Activated CD8-positive, alpha-beta T cell treated with anti-CD3 and anti-CD28 coated beads, Interleukin-2, amount 10 ng/mL, durations not matched to agents 7 days and 5 days (primary cell): ENCODE measurements at regions of chr2 and their contacts with region 1.

Region 1: DNA sequence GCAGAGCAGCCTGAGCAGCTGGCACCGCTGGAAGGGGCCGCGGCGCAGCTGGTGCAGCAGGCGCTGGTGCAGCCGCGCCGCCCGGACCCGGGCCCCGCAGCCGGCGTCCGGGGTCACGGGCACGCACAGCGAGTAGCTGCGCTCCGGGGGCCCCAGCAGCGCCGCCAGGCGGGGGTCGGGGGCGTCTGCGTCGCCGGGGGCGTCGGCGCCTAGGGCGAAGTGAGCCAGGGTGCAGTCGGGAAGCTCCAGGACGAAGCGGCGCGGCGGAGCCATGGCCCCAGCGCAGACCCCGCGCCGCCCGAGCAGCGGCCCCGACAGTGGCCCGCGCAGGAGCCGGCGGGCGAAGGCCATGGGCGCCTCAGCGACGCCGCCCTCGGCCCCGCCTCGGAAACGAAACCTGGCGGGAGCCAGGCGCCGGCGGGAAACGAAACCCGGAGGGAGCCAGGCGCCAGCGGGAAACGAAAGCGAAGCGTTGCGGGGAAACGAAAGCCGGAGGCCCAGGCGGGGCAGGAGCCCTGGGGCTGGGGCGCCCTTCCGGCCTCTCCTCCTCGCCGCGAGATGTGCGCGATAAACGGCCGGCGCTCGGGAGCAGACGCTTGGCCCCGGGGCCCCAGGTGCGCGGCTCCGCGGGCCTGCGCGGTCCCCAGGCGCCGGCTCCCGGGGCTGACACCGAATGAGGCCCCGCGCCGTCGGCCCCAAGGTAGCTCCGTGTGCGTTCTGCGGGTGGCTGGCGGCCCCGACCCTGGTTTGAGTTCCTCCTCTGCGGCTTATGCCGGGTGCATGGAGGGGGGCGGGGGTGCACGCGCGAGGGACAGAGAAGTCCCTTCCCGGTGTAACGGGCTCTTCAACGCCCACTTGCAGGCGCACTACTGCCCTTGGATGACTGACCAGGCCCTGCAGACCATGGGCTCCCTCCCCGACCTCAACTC is at the start of gene CMPK2:
- DNase-seq: peak; percentile 94
- ATAC-seq: peak; percentile 84
- H3K4me3 Mint-ChIP-seq: peak within 1 kb of the TSS; percentile 91
- H3K27ac Mint-ChIP-seq: peak within 1 kb of the TSS; percentile 98
- H3K4me1 Mint-ChIP-seq: peaks cover 68% of the 10 kb centered on the region
- H3K27me3 Mint-ChIP-seq: no peaks in the 10 kb centered on the region
- total RNA-seq, gene CMPK2: 84.0 to 90.8 TPM

Region 2: DNA sequence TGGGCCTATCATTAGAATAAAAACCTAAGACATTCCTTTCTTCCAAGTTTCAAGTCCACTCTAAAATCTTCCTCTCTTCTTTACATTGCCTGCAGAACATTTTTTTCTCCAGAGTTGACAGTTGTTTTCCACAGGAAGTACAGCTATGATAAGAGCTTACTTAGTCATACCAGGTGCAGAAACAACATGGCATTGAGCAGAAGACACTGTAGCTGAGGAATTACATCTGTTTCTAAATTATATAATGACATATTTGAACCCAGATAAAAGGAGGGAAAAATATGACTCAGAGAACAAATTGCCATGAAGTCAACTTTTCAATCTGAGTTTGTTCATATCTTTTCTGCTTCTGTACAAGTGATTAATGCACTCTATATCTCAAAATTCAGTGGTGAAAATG is 30.1 kb before region 1 on chr2:
- CTCF ChIA-PET with region 1: interaction called, 15 read pairs
- POLR2A ChIA-PET with region 1: interaction called, 9 read pairs
- DNase-seq: no peak
- ATAC-seq: peak; percentile 42
- H3K4me3 Mint-ChIP-seq: no peak overlapping the region
- H3K27ac Mint-ChIP-seq: no peak overlapping the region
- H3K4me1 Mint-ChIP-seq: peaks cover 21% of the 10 kb centered on the region
- H3K27me3 Mint-ChIP-seq: no peaks in the 10 kb centered on the region

Region 3: GRCh38 chr2:6845312-6845711 is 20.3 kb before region 1 on chr2:
- CTCF ChIA-PET with region 1: interaction called, 10 read pairs
- POLR2A ChIA-PET with region 1: interaction called, 15 read pairs
- DNase-seq: no peak
- ATAC-seq: peak; percentile 19
- H3K4me3 Mint-ChIP-seq: no peak overlapping the region
- H3K27ac Mint-ChIP-seq: no peak overlapping the region
- H3K4me1 Mint-ChIP-seq: peaks cover 34% of the 10 kb centered on the region
- H3K27me3 Mint-ChIP-seq: no peaks in the 10 kb centered on the region

Region 4: GRCh38 chr2:6877402-6878304 is 12.0 kb after region 1 on chr2 and contains the start of gene RSAD2:
- CTCF ChIA-PET with region 1: interaction called, 157 read pairs
- POLR2A ChIA-PET with region 1: interaction called, 372 read pairs
- DNase-seq: peak; percentile 71
- ATAC-seq: peak; percentile 85
- H3K4me3 Mint-ChIP-seq: peak within 1 kb of the TSS; percentile 94
- H3K27ac Mint-ChIP-seq: peak within 1 kb of the TSS; percentile 94
- H3K4me1 Mint-ChIP-seq: peaks cover 57% of the 10 kb centered on the region
- H3K27me3 Mint-ChIP-seq: no peaks in the 10 kb centered on the region
- total RNA-seq, gene RSAD2: 72.4 to 74.5 TPM

Region 5: GRCh38 chr2:6883448-6884122 is 18.0 kb after region 1 on chr2:
- CTCF ChIA-PET with region 1: interaction called, 157 read pairs
- POLR2A ChIA-PET with region 1: interaction called, 372 read pairs
- DNase-seq: no peak
- ATAC-seq: no peak
- H3K4me3 Mint-ChIP-seq: no peak overlapping the region
- H3K27ac Mint-ChIP-seq: no peak overlapping the region
- H3K4me1 Mint-ChIP-seq: peaks cover 49% of the 10 kb centered on the region
- H3K27me3 Mint-ChIP-seq: no peaks in the 10 kb centered on the region

Region 6: GRCh38 chr2:6909431-6910385 is 44.1 kb after region 1 on chr2:
- CTCF ChIA-PET with region 1: interaction called, 10 read pairs
- POLR2A ChIA-PET with region 1: interaction called, 188 read pairs
- DNase-seq: peak; percentile 87
- ATAC-seq: peak; percentile 76
- H3K4me3 Mint-ChIP-seq: peak overlapping the region; percentile 41
- H3K27ac Mint-ChIP-seq: peak overlapping the region; percentile 93
- H3K4me1 Mint-ChIP-seq: peaks cover 89% of the 10 kb centered on the region
- H3K27me3 Mint-ChIP-seq: no peaks in the 10 kb centered on the region

Region 7: GRCh38 chr2:6917071-6917760 is 51.6 kb after region 1 on chr2 and contains the start of gene RNF144A:
- CTCF ChIA-PET with region 1: interaction called, 13 read pairs
- POLR2A ChIA-PET with region 1: interaction called, 188 read pairs
- DNase-seq: peak; percentile 72
- ATAC-seq: peak; percentile 80
- H3K4me3 Mint-ChIP-seq: peak within 1 kb of the TSS; percentile 85
- H3K27ac Mint-ChIP-seq: peak within 1 kb of the TSS; percentile 86
- H3K4me1 Mint-ChIP-seq: peaks cover 77% of the 10 kb centered on the region
- H3K27me3 Mint-ChIP-seq: no peaks in the 10 kb centered on the region
- total RNA-seq, gene RNF144A: 76.9 to 87.0 TPM

Region 8: DNA sequence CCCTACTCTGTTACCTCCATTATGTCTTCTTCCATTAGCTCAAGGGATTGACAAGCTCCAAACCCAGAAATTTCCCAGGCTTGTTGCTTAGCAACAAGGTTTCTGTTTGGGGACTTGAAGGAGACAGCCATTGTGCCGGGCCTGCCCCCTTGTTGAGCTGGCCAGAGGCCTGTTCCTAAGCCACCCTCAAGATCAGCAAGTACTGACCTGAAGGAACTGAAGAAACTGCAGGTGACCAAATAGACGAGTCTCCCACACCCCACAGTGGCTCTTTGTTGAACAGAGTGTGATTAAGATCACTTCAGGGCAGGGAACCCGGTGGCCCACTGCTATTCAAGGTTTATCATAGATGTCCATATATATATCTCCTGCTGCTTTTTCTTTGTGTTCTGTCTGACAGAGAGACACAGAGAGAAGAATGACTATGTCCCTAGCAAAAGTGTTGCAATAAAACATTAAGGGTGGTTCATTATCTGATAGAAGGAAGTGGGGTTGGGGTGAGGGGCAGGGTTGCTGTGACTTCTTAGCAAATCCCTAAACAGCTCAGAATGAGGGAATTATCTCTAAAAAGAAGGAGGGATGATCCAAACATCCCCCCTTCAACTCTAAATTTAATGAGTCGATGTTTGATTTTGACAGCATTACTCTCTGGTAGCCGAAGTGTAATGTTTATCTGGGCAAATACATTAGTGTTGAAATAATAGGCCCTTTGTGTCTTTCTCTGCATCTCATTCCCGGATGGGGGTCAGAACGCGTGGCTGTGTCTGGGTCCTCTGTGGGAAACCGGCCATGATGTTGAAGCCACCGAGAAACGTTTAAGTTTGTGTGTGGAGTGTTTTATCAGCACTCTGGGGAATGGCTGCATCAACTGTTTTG is 120.9 kb after region 1 on chr2:
- CTCF ChIA-PET with region 1: no interaction called
- POLR2A ChIA-PET with region 1: no interaction called
- DNase-seq: no peak
- ATAC-seq: no peak
- H3K4me3 Mint-ChIP-seq: no peak overlapping the region
- H3K27ac Mint-ChIP-seq: peak overlapping the region; percentile 22
- H3K4me1 Mint-ChIP-seq: no peaks in the 10 kb centered on the region
- H3K27me3 Mint-ChIP-seq: no peaks in the 10 kb centered on the region